ENCODE measurements at regions of chr10 and their contacts with region 1.

Region 1: DNA sequence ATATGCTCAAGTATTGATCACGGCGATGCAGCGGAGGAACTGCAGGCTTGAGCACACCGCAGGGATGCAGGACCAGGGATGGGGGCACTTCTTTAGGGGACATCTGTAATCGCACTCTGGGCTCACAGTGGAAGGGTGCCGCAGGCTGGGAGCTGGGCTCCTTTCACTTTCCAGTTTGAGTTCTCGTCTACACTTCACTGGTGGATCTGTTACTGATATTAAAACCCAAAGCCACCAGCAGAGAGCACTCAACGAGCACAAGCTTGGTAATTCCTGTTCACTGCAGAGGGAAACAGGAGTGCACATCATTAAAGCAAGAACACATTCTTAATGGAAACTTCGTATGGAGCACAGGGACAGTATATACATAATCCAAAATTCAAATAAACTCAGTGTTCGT is 91.3 kb downstream of the PARD3 start:
- DNase-seq: peak; percentile 69
- H3K4me3 Mint-ChIP-seq: peak overlapping the region; percentile 51
- H3K27ac Mint-ChIP-seq: peak overlapping the region; percentile 10
- H3K4me1 Mint-ChIP-seq: peaks cover 41% of the 10 kb centered on the region
- H3K27me3 Mint-ChIP-seq: no peaks in the 10 kb centered on the region
- CTCF ChIP-seq: peak; percentile 53

Region 2: DNA sequence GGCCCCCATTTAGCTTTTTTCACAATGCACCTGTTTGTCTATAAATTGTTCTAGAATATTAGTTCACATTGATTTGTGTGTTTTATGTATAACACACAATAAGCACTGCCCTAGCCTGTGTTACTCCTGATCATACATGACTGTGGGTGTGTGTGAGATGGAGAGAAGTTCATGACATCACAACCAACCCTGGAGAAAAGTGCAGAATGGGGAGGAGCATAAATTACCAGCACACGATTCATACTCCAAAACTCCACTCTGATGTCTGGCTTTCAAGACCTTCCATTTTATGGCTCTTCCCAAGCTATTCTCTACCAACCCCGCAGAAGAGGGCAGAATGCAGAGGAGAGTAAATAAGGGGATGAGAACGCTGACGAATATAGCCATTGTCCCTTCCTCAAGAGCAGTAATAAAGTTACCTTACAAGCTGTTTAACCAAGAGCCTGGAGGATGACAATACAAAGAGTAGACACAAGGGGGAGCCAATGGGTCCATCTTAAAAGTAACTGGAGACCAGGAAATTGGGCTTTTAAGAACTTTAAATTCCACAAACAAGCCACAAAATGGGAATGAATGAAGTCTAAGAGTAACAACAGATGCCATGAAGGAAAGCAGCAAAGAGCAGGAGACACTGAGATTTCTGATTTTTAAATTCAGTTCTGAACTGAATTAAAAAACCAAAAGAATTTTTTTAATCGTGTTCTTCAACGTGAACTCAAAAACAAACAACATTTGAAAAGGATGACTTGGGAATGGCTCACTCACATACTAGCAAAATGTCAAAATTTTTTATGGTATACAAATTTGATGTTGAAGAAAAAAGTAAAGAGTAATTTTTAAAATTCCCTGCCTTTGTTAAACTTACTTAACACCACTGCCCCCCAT is 68.2 kb before region 1 on chr10:
- CTCF ChIA-PET with region 1: interaction called, 10 read pairs
- POLR2A ChIA-PET with region 1: no interaction called
- intact Hi-C with region 1: no loop called
- DNase-seq: peak; percentile 69
- H3K4me3 Mint-ChIP-seq: no peak overlapping the region
- H3K27ac Mint-ChIP-seq: no peak overlapping the region
- H3K4me1 Mint-ChIP-seq: peaks cover 18% of the 10 kb centered on the region
- H3K27me3 Mint-ChIP-seq: no peaks in the 10 kb centered on the region
- CTCF ChIP-seq: peak; percentile 79

Region 3: GRCh38 chr10:34710391-34710751 is 13.4 kb before region 1 on chr10:
- CTCF ChIA-PET with region 1: interaction called, 5 read pairs
- POLR2A ChIA-PET with region 1: interaction called, 21 read pairs
- intact Hi-C with region 1: no loop called
- DNase-seq: peak; percentile 86
- H3K4me3 Mint-ChIP-seq: peak overlapping the region; percentile 24
- H3K27ac Mint-ChIP-seq: peak overlapping the region; percentile 3
- H3K4me1 Mint-ChIP-seq: peaks cover 33% of the 10 kb centered on the region
- H3K27me3 Mint-ChIP-seq: no peaks in the 10 kb centered on the region
- CTCF ChIP-seq: no peak

Region 4: DNA sequence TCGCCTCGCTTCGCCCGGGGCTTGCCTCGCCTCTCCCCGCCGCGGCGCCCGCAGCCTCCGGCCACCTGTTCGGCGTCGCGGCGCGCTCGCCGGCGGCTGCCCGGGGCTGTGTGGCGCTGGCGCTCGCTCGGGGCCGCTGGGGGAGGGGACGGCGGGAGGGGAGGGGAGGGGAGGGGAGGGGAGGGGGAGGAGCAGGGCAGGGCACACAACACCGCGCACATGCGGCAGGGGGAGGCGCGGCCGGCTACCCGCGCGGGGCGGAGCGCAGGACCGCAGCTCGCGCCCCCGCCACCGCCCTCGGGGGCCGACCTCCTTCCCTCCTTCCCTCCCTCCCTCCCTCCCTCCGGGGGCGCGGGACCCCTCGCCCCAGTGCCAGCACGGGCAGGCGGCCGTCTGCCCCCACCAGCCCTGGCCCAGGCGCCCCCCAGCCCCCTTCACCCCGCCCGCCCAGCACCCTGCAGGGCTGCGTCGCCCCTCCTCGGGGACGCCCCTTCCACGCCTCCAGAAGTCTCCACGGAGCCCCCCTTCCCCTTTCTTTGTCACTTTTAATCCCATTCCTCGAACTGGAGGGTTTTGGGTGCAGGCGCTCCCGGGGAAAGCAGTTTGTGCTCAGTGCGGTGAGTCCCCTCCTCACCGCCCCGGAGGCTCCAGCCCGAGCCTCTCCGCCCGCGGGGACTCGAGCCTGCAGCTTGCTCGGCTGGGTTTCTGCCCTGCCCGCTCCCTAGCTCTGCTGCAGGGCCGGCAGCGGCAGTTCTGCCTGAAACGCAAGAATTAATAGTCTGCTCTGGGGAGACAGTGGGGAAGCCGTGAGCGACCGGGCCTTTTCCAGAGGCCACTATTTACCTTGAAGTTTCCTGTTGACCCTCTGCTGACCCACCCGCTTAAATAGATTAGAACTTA is 91.7 kb after region 1 on chr10 and contains the start of gene PARD3:
- CTCF ChIA-PET with region 1: interaction called, 4 read pairs
- POLR2A ChIA-PET with region 1: interaction called, 3 read pairs
- intact Hi-C with region 1: loop called (anchors 2 kb)
- DNase-seq: peak; percentile 42
- H3K4me3 Mint-ChIP-seq: peak within 1 kb of the TSS; percentile 83
- H3K27ac Mint-ChIP-seq: peak within 1 kb of the TSS; percentile 75
- H3K4me1 Mint-ChIP-seq: peaks cover 34% of the 10 kb centered on the region
- H3K27me3 Mint-ChIP-seq: no peaks in the 10 kb centered on the region
- CTCF ChIP-seq: no peak
- total RNA-seq, gene PARD3: 49.6 and 70.0 TPM in 2 replicates

Region 5: DNA sequence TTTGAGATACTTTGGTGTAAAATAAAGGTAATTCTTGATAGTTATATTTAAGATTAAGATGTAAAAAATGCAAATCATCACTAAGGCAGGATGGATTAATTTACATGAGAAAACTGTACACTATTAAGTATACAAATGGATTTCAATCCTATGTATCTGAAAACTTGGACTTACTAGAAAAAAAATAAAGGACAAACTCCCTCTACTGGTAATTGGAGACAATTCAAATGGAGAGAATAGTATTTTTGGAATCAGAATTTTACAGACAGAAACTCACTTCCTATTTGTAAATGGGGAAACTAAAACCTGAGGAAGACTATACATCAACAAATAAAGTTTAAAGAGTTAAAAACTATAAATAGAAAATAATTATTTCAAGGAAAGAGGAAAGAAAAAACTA is 303.8 kb after region 1 on chr10:
- CTCF ChIA-PET with region 1: interaction called, 3 read pairs
- POLR2A ChIA-PET with region 1: interaction called, 3 read pairs
- intact Hi-C with region 1: loop called (anchors 2 kb)
- DNase-seq: peak; percentile 38
- H3K4me3 Mint-ChIP-seq: no peak overlapping the region
- H3K27ac Mint-ChIP-seq: no peak overlapping the region
- H3K4me1 Mint-ChIP-seq: peaks cover 5% of the 10 kb centered on the region
- H3K27me3 Mint-ChIP-seq: no peaks in the 10 kb centered on the region
- CTCF ChIP-seq: peak; percentile 44